ENCODE measurements at regions of chr9 and their contacts with region 1.

Region 1: DNA sequence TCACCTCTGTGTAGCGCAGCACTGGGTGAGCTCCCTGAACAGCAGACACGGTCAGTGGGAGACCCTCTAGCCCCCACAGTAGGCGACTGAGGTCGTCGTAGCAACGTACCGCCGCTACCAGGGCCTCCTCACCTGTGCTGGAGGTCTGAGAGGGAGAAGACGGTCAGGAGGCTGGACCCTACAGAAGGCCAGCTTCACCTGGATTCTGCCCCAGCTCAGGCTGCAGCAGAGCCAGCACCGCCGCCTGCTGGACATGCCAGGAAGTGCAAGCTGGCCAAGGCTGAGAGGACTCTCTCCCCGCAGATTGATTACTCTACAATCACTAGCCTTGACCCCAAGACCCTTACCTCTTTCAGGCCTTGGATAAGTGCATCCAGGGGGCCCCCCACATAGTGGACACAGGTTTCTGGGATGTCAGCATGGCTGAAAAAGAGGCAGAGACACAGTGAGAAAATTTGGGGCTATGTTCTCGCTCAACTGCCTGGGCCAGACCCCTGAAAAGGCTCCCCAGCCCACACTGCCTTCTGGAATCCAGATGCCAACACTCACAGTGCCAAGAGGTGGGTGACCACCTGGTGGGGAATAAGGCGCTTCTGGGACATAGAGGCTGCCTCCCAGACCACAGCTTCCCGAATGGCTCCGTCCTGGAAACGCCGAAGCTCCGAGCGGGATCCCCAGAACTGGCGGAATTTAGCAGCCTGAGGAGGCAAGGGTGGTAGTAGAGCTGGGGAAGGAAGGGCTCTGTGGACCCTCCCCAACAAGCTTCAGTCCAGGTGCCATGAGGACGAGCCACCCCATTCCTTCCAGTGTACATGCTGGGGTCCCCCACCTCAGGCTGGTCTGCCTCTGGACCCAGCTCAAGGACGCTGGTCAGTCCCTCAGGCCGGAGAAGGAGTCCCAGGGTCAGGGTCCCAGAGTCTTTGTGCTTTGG is 6.9 kb downstream of the NOL6 start:
- DNase-seq: peak; percentile 82
- ATAC-seq: peak; percentile 91
- H3K4me3 Mint-ChIP-seq: no peak overlapping the region
- H3K27ac Mint-ChIP-seq: no peak overlapping the region
- H3K4me1 Mint-ChIP-seq: peaks cover 10% of the 10 kb centered on the region
- H3K27me3 Mint-ChIP-seq: no peaks in the 10 kb centered on the region
- CTCF ChIP-seq: peak; percentile 97

Region 2: GRCh38 chr9:33404788-33405362 is 62.0 kb before region 1 on chr9:
- CTCF ChIA-PET with region 1: interaction called, 81 read pairs
- POLR2A ChIA-PET with region 1: no interaction called
- intact Hi-C with region 1: loop called (anchors 5 kb)
- DNase-seq: no peak
- ATAC-seq: no peak
- H3K4me3 Mint-ChIP-seq: no peak overlapping the region
- H3K27ac Mint-ChIP-seq: no peak overlapping the region
- H3K4me1 Mint-ChIP-seq: no peaks in the 10 kb centered on the region
- H3K27me3 Mint-ChIP-seq: no peaks in the 10 kb centered on the region
- CTCF ChIP-seq: no peak

Measured in activated CD8-positive, alpha-beta T cell treated with anti-CD3 and anti-CD28 coated beads for 36 hours (primary cell).